Dendritic cell treated with granulocyte-macrophage colony-stimulating factor and Interleukin-4, amounts not matched to agents 40 ng/mL and 50 ng/mL, for 4 days (primary cell): ENCODE measurements at regions of chr2 and their contacts with region 1.

Region 1: GRCh38 chr2:70043252-70043875 is 43.9 kb upstream of the PCBP1 start:
- H3K4me3 Mint-ChIP-seq: peak overlapping the region; percentile 20
- H3K27ac Mint-ChIP-seq: peak overlapping the region; percentile 87
- H3K4me1 Mint-ChIP-seq: peaks cover 78% of the 10 kb centered on the region
- H3K27me3 Mint-ChIP-seq: no peaks in the 10 kb centered on the region

Region 2: GRCh38 chr2:69997015-69997830 is 46.1 kb before region 1 on chr2:
- intact Hi-C with region 1: loop called (anchors 10 kb)
- H3K4me3 Mint-ChIP-seq: no peak overlapping the region
- H3K27ac Mint-ChIP-seq: peak overlapping the region; percentile 47
- H3K4me1 Mint-ChIP-seq: peaks cover 24% of the 10 kb centered on the region
- H3K27me3 Mint-ChIP-seq: no peaks in the 10 kb centered on the region

Region 3: GRCh38 chr2:70009762-70010575 is 33.4 kb before region 1 on chr2:
- intact Hi-C with region 1: loop called (anchors 5 kb)
- H3K4me3 Mint-ChIP-seq: no peak overlapping the region
- H3K27ac Mint-ChIP-seq: peak overlapping the region; percentile 86
- H3K4me1 Mint-ChIP-seq: peaks cover 24% of the 10 kb centered on the region
- H3K27me3 Mint-ChIP-seq: no peaks in the 10 kb centered on the region

Region 4: GRCh38 chr2:70029814-70030409 is 13.5 kb before region 1 on chr2:
- intact Hi-C with region 1: loop called (anchors 1 kb)
- H3K4me3 Mint-ChIP-seq: no peak overlapping the region
- H3K27ac Mint-ChIP-seq: peak overlapping the region; percentile 83
- H3K4me1 Mint-ChIP-seq: peaks cover 62% of the 10 kb centered on the region
- H3K27me3 Mint-ChIP-seq: no peaks in the 10 kb centered on the region